ENCODE measurements at regions of chr14 and their contacts with region 1.

Region 1: GRCh38 chr14:68060198-68060597 is 240.6 kb downstream of the RAD51B start:
- DNase-seq: no peak
- ATAC-seq: no peak

Region 2: GRCh38 chr14:67270145-67270753 is 789.9 kb before region 1 on chr14:
- intact Hi-C with region 1: no loop called
- DNase-seq: no peak
- ATAC-seq: peak in 1 of 2 donors; percentile 36

Region 3: GRCh38 chr14:67846029-67846610 is 214.1 kb before region 1 on chr14:
- intact Hi-C with region 1: loop called in 1 of 2 experiments (anchors 10 kb)
- DNase-seq: no peak
- ATAC-seq: no peak